ENCODE measurements at regions of chr9 and their contacts with region 1.

Region 1: DNA sequence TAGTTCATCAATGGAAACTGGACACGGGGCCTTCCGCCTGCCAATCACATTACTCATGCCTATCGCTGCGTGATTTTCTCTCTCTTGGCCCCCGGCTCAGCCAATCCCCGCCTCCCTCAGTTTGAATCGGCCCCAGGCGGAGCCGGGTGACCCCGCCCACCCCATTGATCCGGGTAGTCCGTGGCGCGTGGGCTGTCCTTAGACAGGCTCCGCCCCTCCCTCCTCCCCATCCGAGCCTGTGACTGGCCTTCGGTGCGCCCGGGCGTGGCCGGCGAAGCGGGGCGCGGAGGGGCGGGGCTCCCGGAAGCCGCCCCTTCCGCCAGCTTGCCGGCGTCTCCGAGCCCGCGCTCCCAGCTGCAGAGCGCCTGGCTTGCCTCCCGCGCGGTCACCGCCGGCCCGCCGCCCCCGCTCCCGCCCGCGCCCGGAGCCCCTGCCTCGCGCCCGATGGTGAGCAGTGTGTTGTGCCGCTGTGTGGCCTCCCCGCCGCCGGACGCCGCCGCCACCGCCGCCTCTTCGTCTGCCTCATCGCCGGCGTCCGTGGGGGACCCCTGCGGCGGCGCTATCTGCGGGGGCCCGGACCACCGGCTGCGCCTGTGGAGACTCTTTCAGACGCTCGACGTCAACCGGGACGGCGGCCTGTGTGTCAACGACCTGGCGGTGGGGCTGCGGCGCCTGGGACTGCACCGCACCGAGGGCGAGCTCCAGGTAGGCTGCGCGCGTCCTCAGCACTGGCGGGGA is at the start of gene SLC25A25:
- DNase-seq: peak; percentile 98
- CTCF ChIP-seq: no peak

Region 2: DNA sequence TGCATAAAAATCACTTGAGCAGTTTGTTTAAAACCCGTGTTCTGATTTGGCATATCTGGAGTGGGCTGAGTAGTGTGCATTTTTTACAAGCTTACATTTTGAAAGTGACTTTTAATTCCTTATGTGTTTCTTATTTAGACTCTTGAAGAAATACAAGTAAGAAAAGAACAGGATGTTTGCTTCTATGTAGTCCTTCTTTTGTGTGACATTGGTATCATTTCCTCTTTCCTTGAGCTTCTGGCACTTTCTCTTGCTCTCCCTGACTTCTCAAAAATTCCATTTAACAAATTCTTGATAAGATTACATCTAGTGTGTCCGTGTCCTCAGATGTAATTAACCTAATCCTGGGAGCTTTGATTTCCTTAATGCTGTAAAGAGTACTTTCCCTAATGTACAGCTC is 790.9 kb before region 1 on chr9:
- CTCF ChIA-PET with region 1: no interaction called
- POLR2A ChIA-PET with region 1: no interaction called
- DNase-seq: peak; percentile 27
- CTCF ChIP-seq: no peak

Region 3: GRCh38 chr9:128081056-128081455 is 13.0 kb after region 1 on chr9:
- CTCF ChIA-PET with region 1: interaction called, 21 read pairs
- POLR2A ChIA-PET with region 1: interaction called, 6 read pairs
- DNase-seq: no peak
- CTCF ChIP-seq: no peak